CD4-positive, alpha-beta memory T cell (primary cell): ENCODE measurements at regions of chr10 and their contacts with region 1.

Region 1: DNA sequence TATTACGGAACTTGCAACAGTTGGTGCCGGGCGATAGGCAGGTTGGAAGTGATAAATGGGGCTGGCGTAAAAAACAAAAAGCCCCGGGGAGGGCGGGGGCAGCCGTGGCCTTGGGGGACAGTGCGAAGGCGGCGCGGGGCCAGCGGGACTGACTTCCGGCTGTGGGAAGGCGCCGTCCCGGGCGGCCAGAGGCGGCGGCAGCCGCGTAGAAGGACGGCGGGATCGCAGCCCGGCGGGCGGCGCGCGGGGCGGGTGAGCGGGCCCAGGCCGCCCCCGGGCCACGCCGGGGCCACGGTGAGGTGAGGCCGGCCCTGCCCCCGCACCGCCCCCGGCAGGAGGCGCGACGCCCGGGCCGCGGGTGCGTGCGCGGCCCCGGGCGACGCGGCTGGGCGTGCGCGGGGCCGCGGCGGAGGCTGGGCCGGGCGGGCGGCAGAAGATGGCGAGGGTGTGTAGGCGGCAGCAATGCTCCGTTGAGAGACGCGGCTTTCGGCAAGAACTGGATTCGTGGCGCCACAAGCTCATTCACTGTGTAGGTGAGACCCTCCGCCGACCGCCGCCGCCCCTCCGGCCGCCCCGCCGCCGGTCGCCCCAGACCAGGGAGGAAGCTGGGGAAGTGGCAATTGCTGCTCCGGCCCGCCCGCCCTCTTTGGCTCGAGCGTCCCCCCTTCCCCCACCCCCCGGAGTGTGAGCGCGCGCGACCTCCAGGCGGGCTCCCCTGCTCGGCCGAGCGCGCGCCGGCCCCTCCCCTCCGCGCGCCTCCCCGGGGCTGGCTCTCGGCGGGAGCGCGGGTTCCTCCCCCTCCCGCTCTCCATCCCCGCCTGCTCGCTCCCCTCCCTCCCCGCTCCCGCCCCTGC is at the start of gene LCOR:
- DNase-seq: peak; percentile 84 to 91 (median 87)
- H3K4me3 ChIP-seq: peak within 1 kb of the TSS; percentile 61 to 68
- H3K4me3 Mint-ChIP-seq: peak within 1 kb of the TSS; percentile 89 to 96 (median 92)
- H3K27ac ChIP-seq: peak within 1 kb of the TSS; percentile 72
- H3K27ac Mint-ChIP-seq: peak within 1 kb of the TSS; percentile 94 to 99 (median 97)
- H3K4me1 ChIP-seq: peaks cover 53% of the 10 kb centered on the region
- H3K4me1 Mint-ChIP-seq: peaks cover 35 to 56% (median 46%) of the 10 kb centered on the region in 4 donors
- H3K27me3 ChIP-seq: no peaks in the 10 kb centered on the region
- H3K27me3 Mint-ChIP-seq: no peaks in the 10 kb centered on the region
- total RNA-seq, gene LCOR: 44.1 to 44.9 TPM

Region 2: GRCh38 chr10:96374985-96375830 is 456.9 kb before region 1 on chr10:
- CTCF ChIA-PET with region 1: no interaction called
- POLR2A ChIA-PET with region 1: no interaction called
- intact Hi-C with region 1: loop called (anchors 1 kb)
- DNase-seq: peak; percentile 52 to 55 (median 54)
- H3K4me3 ChIP-seq: peak overlapping the region; percentile 22 to 44
- H3K4me3 Mint-ChIP-seq: peak overlapping the region; percentile 63 to 88 (median 83)
- H3K27ac ChIP-seq: no peak overlapping the region
- H3K27ac Mint-ChIP-seq: no peak overlapping the region
- H3K4me1 ChIP-seq: peaks cover 11% of the 10 kb centered on the region
- H3K4me1 Mint-ChIP-seq: peaks cover 6 to 16% (median 10%) of the 10 kb centered on the region in 4 donors
- H3K27me3 ChIP-seq: no peaks in the 10 kb centered on the region
- H3K27me3 Mint-ChIP-seq: peaks cover 1 to 5% of the 10 kb centered on the region in 2 donors

Region 3: DNA sequence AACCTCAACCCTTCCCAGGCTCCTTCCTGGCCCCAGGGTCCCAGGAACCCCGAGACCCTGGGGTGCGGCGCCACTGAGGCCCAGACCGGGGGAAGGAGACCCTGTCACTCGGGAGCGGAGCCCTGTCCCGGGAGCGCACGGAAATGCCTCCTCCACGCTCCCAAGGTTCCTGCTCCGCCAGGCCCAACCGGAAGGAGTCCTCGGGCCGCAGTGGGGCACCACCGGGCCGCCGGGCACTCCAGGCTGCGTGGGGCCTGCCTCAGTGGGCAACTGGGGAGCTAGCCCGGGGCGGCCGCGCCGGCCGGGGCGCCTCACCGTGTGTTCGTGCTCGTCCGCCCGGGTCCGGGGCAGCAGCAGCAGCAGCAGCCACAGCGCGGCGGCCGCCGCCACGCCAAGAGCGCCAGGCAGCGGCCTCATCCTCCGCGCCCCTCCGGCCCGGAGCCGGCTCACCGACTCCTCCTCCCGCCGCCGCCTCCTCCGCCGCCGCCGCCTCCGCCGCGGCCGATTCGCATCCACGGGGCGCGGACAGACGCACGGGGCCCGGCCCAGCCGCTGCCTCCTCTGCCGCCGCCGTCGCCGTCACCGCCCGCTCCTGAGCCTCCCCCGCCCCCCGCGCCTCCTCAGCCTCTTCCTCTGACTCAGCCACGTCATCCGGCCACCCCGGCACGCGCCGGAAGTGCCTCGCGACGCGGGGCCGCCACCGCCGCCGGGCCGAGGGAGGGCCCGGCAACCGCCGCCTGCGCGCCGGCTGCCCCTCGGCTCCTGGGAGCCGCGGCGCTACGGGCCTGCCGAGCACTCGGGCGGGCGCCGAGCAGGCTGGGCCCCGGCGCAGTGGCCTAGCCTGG is 245.5 kb before region 1 on chr10 and contains the start of gene TM9SF3:
- CTCF ChIA-PET with region 1: no interaction called
- POLR2A ChIA-PET with region 1: interaction called, 9 read pairs
- intact Hi-C with region 1: loop called (anchors 2 kb)
- DNase-seq: peak; percentile 89 to 94 (median 90)
- H3K4me3 ChIP-seq: peak within 1 kb of the TSS; percentile 18 to 57
- H3K4me3 Mint-ChIP-seq: peak within 1 kb of the TSS; percentile 84 to 98 (median 90)
- H3K27ac ChIP-seq: peak within 1 kb of the TSS; percentile 99
- H3K27ac Mint-ChIP-seq: peak within 1 kb of the TSS; percentile 94 to 98 (median 97)
- H3K4me1 ChIP-seq: peaks cover 64% of the 10 kb centered on the region
- H3K4me1 Mint-ChIP-seq: peaks cover 24 to 43% (median 32%) of the 10 kb centered on the region in 4 donors
- H3K27me3 ChIP-seq: no peaks in the 10 kb centered on the region
- H3K27me3 Mint-ChIP-seq: no peaks in the 10 kb centered on the region
- total RNA-seq, gene TM9SF3: 109 to 110 TPM

Region 4: DNA sequence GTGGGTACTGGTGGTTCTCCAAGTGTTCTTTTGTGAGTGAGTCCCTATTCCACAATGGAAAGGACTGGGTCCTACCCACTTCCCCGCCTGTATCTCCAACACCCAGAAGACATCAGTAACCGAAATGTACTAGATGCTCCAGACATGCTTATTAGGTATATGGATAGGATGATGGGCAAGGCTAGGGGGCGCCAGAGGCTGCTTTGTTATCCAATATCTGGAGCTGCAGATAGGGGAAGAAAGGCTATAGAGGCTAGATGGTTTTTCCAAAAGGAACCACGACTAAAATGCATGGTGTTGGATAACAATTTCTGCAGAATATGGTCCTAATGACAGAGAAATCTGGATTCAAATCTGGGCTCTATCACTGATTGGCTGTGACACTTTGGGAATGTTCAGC is 189.1 kb before region 1 on chr10:
- CTCF ChIA-PET with region 1: interaction called, 6 read pairs
- POLR2A ChIA-PET with region 1: no interaction called
- intact Hi-C with region 1: loop called (anchors 1 kb)
- DNase-seq: peak in 4 of 5 donors; percentile 8 to 44 (median 16)
- H3K4me3 ChIP-seq: no peak overlapping the region
- H3K4me3 Mint-ChIP-seq: no peak overlapping the region
- H3K27ac ChIP-seq: no peak overlapping the region
- H3K27ac Mint-ChIP-seq: no peak overlapping the region
- H3K4me1 ChIP-seq: peaks cover 5% of the 10 kb centered on the region
- H3K4me1 Mint-ChIP-seq: peaks cover 5 to 20% (median 13%) of the 10 kb centered on the region in 4 donors
- H3K27me3 ChIP-seq: no peaks in the 10 kb centered on the region
- H3K27me3 Mint-ChIP-seq: no peaks in the 10 kb centered on the region

Region 5: GRCh38 chr10:96719850-96720421 is 112.2 kb before region 1 on chr10:
- CTCF ChIA-PET with region 1: interaction called, 3 read pairs
- POLR2A ChIA-PET with region 1: no interaction called
- intact Hi-C with region 1: loop called (anchors 2 kb)
- DNase-seq: peak in 4 of 5 donors; percentile 5 to 44 (median 12)
- H3K4me3 ChIP-seq: peak overlapping the region in 1 of 2 donors; percentile 61
- H3K4me3 Mint-ChIP-seq: peak overlapping the region; percentile 89 to 97 (median 92)
- H3K27ac ChIP-seq: no peak overlapping the region
- H3K27ac Mint-ChIP-seq: peak overlapping the region in 5 of 7 donors; percentile 44 to 84 (median 71)
- H3K4me1 ChIP-seq: peaks cover 15% of the 10 kb centered on the region
- H3K4me1 Mint-ChIP-seq: peaks cover 12 to 20% (median 16%) of the 10 kb centered on the region in 4 donors
- H3K27me3 ChIP-seq: no peaks in the 10 kb centered on the region
- H3K27me3 Mint-ChIP-seq: no peaks in the 10 kb centered on the region

Region 6: DNA sequence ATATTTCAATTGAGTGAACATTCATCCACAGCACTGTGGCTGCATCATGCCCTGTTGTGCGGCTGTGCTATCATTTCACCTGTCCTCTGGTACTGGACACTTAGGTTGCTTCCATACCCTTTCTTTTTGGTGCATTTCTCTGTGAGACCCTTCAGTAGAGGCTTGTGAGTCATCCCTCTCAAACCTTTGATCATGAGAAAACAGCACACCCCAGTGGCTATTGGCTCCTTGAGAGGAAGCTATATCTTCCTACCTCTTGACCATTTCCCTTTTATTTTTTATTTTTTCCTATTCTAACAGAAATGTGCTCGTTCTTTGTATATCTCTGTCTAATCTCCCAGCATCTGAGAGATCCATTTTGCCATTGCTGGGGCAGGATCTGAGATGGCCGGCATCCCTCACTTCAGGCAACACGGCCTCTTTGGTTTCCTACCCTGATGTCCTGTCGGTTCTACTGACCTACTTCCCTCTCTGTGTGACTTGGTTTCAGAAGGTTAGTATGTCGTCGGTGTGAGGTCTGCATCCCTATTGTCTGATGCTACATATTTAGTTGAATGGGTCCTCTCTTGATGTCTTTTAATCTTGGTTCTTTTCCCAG is 88.0 kb before region 1 on chr10:
- CTCF ChIA-PET with region 1: no interaction called
- POLR2A ChIA-PET with region 1: no interaction called
- intact Hi-C with region 1: no loop called
- DNase-seq: no peak
- H3K4me3 ChIP-seq: no peak overlapping the region
- H3K4me3 Mint-ChIP-seq: no peak overlapping the region
- H3K27ac ChIP-seq: no peak overlapping the region
- H3K27ac Mint-ChIP-seq: peak overlapping the region in 2 of 7 donors; percentile 14 to 79
- H3K4me1 ChIP-seq: no peaks in the 10 kb centered on the region
- H3K4me1 Mint-ChIP-seq: peaks cover 0 to 8% (median under 1%) of the 10 kb centered on the region in 4 donors
- H3K27me3 ChIP-seq: no peaks in the 10 kb centered on the region
- H3K27me3 Mint-ChIP-seq: peaks cover 0 to 5% of the 10 kb centered on the region in 2 donors

Region 7: DNA sequence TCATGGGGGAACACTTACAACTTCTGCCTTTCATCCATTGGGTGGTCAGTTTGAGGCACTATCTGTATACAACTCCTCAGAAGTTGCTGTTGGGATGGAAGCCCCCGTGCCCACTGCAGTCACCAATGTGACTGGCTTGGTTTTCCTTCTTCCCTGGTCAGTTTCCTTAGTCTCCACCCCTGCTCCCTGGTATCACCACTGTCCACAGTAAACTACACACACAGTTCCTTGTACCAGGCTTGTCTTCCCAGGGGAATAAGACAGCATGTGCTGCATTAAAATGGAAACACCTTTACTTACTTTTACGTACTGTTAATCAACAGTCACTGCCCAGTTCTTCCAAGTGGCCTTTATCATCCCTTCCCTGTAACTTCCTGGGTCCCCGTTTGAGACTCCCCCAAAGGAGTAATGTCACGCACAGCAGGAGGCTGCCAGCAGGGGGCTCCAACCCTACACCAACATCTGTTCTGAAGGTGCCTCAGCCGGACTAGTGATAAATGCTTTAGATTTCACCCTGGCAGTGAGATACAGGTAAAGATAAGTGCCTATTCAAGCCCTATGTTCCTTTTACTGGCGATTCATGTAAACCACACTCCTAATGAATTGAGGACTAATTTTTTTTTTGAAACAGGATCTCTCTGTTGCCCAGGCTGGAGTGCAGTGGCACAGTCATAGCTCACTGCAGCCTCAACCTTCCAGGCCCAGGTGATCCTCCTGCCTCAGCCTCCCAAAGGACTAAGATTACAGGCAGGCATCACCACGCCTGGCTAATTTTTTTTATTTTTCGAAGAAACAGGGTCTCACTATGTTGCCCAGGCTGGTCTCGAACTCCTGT is 66.5 kb before region 1 on chr10:
- CTCF ChIA-PET with region 1: interaction called, 6 read pairs
- POLR2A ChIA-PET with region 1: no interaction called
- intact Hi-C with region 1: loop called (anchors 1 kb)
- DNase-seq: peak; percentile 43 to 70 (median 63)
- H3K4me3 ChIP-seq: no peak overlapping the region
- H3K4me3 Mint-ChIP-seq: no peak overlapping the region
- H3K27ac ChIP-seq: no peak overlapping the region
- H3K27ac Mint-ChIP-seq: peak overlapping the region in 2 of 7 donors; percentile 35 to 49
- H3K4me1 ChIP-seq: no peaks in the 10 kb centered on the region
- H3K4me1 Mint-ChIP-seq: peaks cover 0 to 4% (median under 1%) of the 10 kb centered on the region in 4 donors
- H3K27me3 ChIP-seq: no peaks in the 10 kb centered on the region
- H3K27me3 Mint-ChIP-seq: peaks cover 0 to 1% of the 10 kb centered on the region in 2 donors

Region 8: GRCh38 chr10:96814264-96814663 is 17.8 kb before region 1 on chr10:
- CTCF ChIA-PET with region 1: no interaction called
- POLR2A ChIA-PET with region 1: no interaction called
- intact Hi-C with region 1: no loop called
- DNase-seq: no peak
- H3K4me3 ChIP-seq: no peak overlapping the region
- H3K4me3 Mint-ChIP-seq: no peak overlapping the region
- H3K27ac ChIP-seq: no peak overlapping the region
- H3K27ac Mint-ChIP-seq: no peak overlapping the region
- H3K4me1 ChIP-seq: no peaks in the 10 kb centered on the region
- H3K4me1 Mint-ChIP-seq: no peaks in the 10 kb centered on the region
- H3K27me3 ChIP-seq: no peaks in the 10 kb centered on the region
- H3K27me3 Mint-ChIP-seq: peaks cover 10 to 15% of the 10 kb centered on the region in 2 donors

Region 9: GRCh38 chr10:96991313-96991841 is 159.3 kb after region 1 on chr10:
- CTCF ChIA-PET with region 1: no interaction called
- POLR2A ChIA-PET with region 1: no interaction called
- intact Hi-C with region 1: no loop called
- DNase-seq: no peak
- H3K4me3 ChIP-seq: no peak overlapping the region
- H3K4me3 Mint-ChIP-seq: no peak overlapping the region
- H3K27ac ChIP-seq: no peak overlapping the region
- H3K27ac Mint-ChIP-seq: peak overlapping the region in 1 of 7 donors; percentile 26
- H3K4me1 ChIP-seq: no peaks in the 10 kb centered on the region
- H3K4me1 Mint-ChIP-seq: peaks cover 0 to 2% (median 0%) of the 10 kb centered on the region in 4 donors
- H3K27me3 ChIP-seq: no peaks in the 10 kb centered on the region
- H3K27me3 Mint-ChIP-seq: no peaks in the 10 kb centered on the region

Region 10: GRCh38 chr10:97318772-97319651 is 486.9 kb after region 1 on chr10 and contains the start of gene FRAT1:
- CTCF ChIA-PET with region 1: no interaction called
- POLR2A ChIA-PET with region 1: no interaction called
- intact Hi-C with region 1: loop called (anchors 10 kb)
- DNase-seq: peak; percentile 90 to 97 (median 94)
- H3K4me3 ChIP-seq: peak within 1 kb of the TSS; percentile 50 to 84
- H3K4me3 Mint-ChIP-seq: peak within 1 kb of the TSS; percentile 93 to 99 (median 96)
- H3K27ac ChIP-seq: peak within 1 kb of the TSS; percentile 99
- H3K27ac Mint-ChIP-seq: peak within 1 kb of the TSS; percentile 96 to 100 (median 99)
- H3K4me1 ChIP-seq: peaks cover 21% of the 10 kb centered on the region
- H3K4me1 Mint-ChIP-seq: peaks cover 16 to 44% (median 31%) of the 10 kb centered on the region in 4 donors
- H3K27me3 ChIP-seq: no peaks in the 10 kb centered on the region
- H3K27me3 Mint-ChIP-seq: peaks cover 0 to 3% of the 10 kb centered on the region in 2 donors
- total RNA-seq, gene FRAT1: 20.2 to 21.8 TPM